Activated T-helper 1 cell treated with anti-CD3 and anti-CD28 coated beads, Interleukin-12 subunit alpha, Interleukin-12 subunit beta, Interleukin-2, Interleukin-4 antibody, amounts not matched to agents 30 ng/mL and 10 ng/mL and 1 ng/mL, durations not matched to agents 14 hours and 24 hours and 36 hours (primary cell): ENCODE measurements at regions of chr14 and their contacts with region 1.

Region 1: DNA sequence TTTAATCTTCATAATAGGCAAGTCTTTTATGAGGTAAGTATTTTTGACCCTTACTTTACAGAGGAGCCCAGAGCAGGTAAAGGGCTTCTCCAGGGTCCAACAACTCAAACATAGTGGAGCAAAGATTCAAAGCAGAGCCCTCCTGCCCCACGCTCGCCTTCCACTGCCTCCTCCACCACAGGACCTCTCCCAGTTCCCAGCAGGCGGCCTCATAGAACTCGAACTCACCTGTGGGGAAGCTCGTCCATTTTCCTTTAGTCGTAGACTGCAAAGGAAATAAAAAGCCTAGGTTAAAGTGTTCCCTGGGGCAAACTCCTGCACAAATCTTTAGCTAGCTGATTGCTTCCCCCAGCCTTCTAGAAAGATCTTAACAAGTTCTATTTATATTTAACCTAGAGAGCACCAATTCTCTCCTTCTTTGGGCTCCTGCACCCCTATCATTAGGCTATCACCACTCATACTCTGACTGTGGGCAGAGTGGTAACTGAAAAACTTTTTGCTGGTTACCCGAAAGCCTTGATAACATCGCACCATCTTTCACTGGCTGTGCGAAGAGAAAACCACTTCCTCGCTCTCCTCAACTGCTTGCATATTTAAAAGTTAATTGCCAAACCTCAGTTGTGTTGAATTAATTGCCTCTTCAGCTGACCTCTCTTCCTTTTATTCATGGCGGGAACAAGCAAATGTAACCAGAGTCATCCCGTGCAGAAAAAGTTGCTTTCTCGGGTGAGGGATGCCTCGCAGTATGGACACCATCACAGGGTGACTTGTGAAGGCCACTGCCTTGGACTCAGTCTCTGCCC is 299.6 kb downstream of the DPF3 start:
- DNase-seq: peak; percentile 63
- H3K4me3 Mint-ChIP-seq: peak overlapping the region; percentile 47
- H3K27ac Mint-ChIP-seq: peak overlapping the region; percentile 61
- H3K4me1 Mint-ChIP-seq: peaks cover 66% of the 10 kb centered on the region
- H3K27me3 Mint-ChIP-seq: peaks cover 4% of the 10 kb centered on the region

Region 2: GRCh38 chr14:72186401-72186905 is 407.8 kb before region 1 on chr14:
- intact Hi-C with region 1: no loop called
- DNase-seq: no peak
- H3K4me3 Mint-ChIP-seq: no peak overlapping the region
- H3K27ac Mint-ChIP-seq: no peak overlapping the region
- H3K4me1 Mint-ChIP-seq: no peaks in the 10 kb centered on the region
- H3K27me3 Mint-ChIP-seq: peaks cover 2% of the 10 kb centered on the region

Region 3: DNA sequence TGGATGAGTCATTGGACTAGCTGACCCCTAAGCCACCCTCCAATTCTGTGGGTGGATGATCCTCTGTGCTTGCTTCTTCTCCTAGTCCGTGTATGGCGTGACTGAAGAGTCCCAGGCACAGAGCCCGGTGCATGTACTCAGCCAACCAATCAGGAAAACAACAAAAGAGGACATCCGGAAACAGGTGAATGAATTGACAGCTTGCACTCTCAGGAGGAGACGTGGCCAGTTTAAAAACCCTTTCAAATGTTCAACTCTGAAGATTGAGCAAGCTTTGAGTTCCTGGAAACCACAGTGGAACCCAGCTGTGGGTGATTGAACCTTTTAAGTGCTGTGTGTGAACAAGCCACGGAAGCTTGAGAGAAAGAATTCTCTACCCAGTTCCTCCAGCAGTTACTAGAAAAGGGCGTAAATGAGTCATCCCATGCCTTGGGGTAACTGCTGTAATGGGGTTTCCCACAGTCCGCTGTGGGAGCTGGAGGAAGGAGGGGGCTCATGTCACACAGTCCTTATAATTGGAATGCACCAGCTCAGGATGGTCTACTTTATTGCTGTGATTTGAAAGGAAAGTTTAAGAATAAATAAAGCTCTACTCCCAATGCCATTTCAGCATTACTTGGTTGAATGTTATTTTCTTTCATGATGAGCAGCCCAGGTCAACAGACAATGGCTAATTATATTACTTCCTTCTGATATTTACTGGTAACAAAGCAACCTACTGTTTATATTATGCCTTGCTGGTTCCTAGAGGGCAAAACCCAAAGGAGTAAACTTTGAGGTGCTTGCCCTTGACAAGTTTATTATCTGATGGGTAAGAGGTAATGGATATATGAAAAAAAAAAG is 117.4 kb before region 1 on chr14:
- intact Hi-C with region 1: loop called (anchors 2 kb)
- DNase-seq: peak; percentile 81
- H3K4me3 Mint-ChIP-seq: peak overlapping the region; percentile 53
- H3K27ac Mint-ChIP-seq: peak overlapping the region; percentile 87
- H3K4me1 Mint-ChIP-seq: peaks cover 80% of the 10 kb centered on the region
- H3K27me3 Mint-ChIP-seq: no peaks in the 10 kb centered on the region

Region 4: DNA sequence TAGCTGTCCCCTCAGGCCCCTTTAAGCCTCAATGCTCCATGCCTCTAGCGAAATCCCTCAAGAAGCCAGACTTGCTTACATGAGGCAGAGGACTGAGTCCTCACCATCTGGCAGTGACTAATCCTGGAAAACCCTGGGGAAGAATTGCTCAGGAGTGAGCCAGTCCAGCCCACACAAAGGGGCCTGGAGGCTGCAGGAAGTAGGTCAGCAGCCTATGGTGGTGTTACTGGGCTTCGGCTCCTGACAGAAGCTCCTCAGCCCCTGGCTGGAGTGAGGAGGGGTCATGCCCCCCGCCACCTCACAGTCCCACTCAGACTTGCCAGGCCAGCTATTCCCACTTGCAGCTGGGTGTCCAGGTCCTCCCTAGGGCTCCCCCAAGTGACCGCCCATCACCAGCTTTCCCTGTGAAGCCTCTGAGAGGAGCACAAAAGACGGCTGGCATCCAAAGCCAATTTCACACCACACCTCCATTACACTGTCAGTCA is 49.1 kb after region 1 on chr14:
- intact Hi-C with region 1: no loop called
- DNase-seq: no peak
- H3K4me3 Mint-ChIP-seq: no peak overlapping the region
- H3K27ac Mint-ChIP-seq: no peak overlapping the region
- H3K4me1 Mint-ChIP-seq: peaks cover 12% of the 10 kb centered on the region
- H3K27me3 Mint-ChIP-seq: peaks cover 10% of the 10 kb centered on the region

Region 5: GRCh38 chr14:72665259-72665658 is 71.0 kb after region 1 on chr14:
- intact Hi-C with region 1: loop called (anchors 5 kb)
- DNase-seq: no peak
- H3K4me3 Mint-ChIP-seq: no peak overlapping the region
- H3K27ac Mint-ChIP-seq: no peak overlapping the region
- H3K4me1 Mint-ChIP-seq: peaks cover 21% of the 10 kb centered on the region
- H3K27me3 Mint-ChIP-seq: peaks cover 5% of the 10 kb centered on the region

Region 6: GRCh38 chr14:72810201-72810600 is 215.9 kb after region 1 on chr14:
- intact Hi-C with region 1: loop called (anchors 1 kb)
- DNase-seq: peak; percentile 57
- H3K4me3 Mint-ChIP-seq: peak overlapping the region; percentile 48
- H3K27ac Mint-ChIP-seq: peak overlapping the region; percentile 92
- H3K4me1 Mint-ChIP-seq: peaks cover 31% of the 10 kb centered on the region
- H3K27me3 Mint-ChIP-seq: peaks cover 3% of the 10 kb centered on the region

Region 7: DNA sequence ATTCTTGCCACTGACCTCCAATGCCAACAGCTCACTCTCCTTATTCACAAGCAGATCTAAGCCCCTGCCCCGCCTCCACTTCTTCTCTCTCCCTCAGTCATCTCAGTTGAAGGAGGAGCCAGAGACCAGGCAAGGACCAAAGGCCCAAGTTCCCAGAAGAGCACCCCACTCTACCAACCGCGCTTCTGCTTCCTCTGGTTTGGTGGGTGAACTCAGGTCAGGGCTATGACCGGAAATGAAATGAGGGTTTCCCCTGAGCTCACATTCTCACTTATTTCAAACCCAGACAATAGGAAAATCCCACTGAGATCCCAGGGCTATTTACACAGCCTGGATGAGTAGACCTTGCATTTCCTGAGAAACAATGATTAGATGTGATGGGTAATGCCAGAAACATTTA is 289.7 kb after region 1 on chr14:
- intact Hi-C with region 1: no loop called
- DNase-seq: no peak
- H3K4me3 Mint-ChIP-seq: no peak overlapping the region
- H3K27ac Mint-ChIP-seq: peak overlapping the region; percentile 61
- H3K4me1 Mint-ChIP-seq: peaks cover 52% of the 10 kb centered on the region
- H3K27me3 Mint-ChIP-seq: peaks cover 5% of the 10 kb centered on the region

Region 8: GRCh38 chr14:72904840-72905561 is 310.7 kb after region 1 on chr14:
- intact Hi-C with region 1: loop called (anchors 2 kb)
- DNase-seq: peak; percentile 55
- H3K4me3 Mint-ChIP-seq: no peak overlapping the region
- H3K27ac Mint-ChIP-seq: no peak overlapping the region
- H3K4me1 Mint-ChIP-seq: peaks cover 31% of the 10 kb centered on the region
- H3K27me3 Mint-ChIP-seq: peaks cover 19% of the 10 kb centered on the region